CD4-positive, alpha-beta memory T cell (primary cell): ENCODE measurements at regions of chr17 and their contacts with region 1.

Region 1: DNA sequence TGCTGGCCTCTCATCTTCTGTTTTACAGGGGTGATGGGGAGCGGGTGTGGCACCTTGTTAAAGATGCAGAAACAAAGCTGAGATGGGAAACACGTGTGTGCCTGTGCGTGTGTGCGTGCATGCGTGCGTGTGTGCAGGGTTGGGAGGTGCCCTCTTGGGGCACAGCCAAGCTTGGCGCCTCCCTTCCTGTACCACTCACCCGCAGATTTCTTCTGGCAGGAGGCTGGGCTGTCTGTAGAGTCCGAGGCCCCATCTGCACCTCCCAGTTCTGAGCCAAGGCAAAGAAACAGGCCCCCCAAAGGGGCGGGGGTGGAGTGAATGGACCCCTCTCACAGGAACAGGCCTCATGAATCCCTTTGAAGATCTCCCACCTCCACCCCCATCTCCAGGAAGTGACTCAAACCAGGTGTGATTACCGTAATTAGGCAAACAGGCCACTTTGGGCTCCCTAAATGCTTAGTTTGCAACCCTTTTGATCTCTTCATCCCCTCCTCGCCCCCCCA is 20.9 kb downstream of the TNS4 start:
- DNase-seq: peak; percentile 92 to 96 (median 95)
- H3K4me3 ChIP-seq: peak overlapping the region in 1 of 2 donors; percentile 26
- H3K4me3 Mint-ChIP-seq: peak overlapping the region; percentile 49 to 78 (median 73)
- H3K27ac ChIP-seq: peak overlapping the region; percentile 83
- H3K27ac Mint-ChIP-seq: peak overlapping the region; percentile 97 to 100 (median 99)
- H3K4me1 ChIP-seq: peaks cover 91% of the 10 kb centered on the region
- H3K4me1 Mint-ChIP-seq: peaks cover 31 to 83% (median 55%) of the 10 kb centered on the region in 4 donors
- H3K27me3 ChIP-seq: no peaks in the 10 kb centered on the region
- H3K27me3 Mint-ChIP-seq: no peaks in the 10 kb centered on the region

Region 2: GRCh38 chr17:40516581-40517285 is 36.2 kb after region 1 on chr17:
- CTCF ChIA-PET with region 1: interaction called, 10 read pairs
- POLR2A ChIA-PET with region 1: interaction called, 53 read pairs
- intact Hi-C with region 1: loop called (anchors 1 kb)
- DNase-seq: peak; percentile 84 to 90 (median 87)
- H3K4me3 ChIP-seq: peak overlapping the region; percentile 51 to 70
- H3K4me3 Mint-ChIP-seq: peak overlapping the region; percentile 76 to 91 (median 84)
- H3K27ac ChIP-seq: peak overlapping the region; percentile 32
- H3K27ac Mint-ChIP-seq: peak overlapping the region; percentile 89 to 99 (median 96)
- H3K4me1 ChIP-seq: peaks cover 77% of the 10 kb centered on the region
- H3K4me1 Mint-ChIP-seq: peaks cover 51 to 76% (median 61%) of the 10 kb centered on the region in 4 donors
- H3K27me3 ChIP-seq: no peaks in the 10 kb centered on the region
- H3K27me3 Mint-ChIP-seq: peaks cover 0 to 2% of the 10 kb centered on the region in 2 donors

Region 3: DNA sequence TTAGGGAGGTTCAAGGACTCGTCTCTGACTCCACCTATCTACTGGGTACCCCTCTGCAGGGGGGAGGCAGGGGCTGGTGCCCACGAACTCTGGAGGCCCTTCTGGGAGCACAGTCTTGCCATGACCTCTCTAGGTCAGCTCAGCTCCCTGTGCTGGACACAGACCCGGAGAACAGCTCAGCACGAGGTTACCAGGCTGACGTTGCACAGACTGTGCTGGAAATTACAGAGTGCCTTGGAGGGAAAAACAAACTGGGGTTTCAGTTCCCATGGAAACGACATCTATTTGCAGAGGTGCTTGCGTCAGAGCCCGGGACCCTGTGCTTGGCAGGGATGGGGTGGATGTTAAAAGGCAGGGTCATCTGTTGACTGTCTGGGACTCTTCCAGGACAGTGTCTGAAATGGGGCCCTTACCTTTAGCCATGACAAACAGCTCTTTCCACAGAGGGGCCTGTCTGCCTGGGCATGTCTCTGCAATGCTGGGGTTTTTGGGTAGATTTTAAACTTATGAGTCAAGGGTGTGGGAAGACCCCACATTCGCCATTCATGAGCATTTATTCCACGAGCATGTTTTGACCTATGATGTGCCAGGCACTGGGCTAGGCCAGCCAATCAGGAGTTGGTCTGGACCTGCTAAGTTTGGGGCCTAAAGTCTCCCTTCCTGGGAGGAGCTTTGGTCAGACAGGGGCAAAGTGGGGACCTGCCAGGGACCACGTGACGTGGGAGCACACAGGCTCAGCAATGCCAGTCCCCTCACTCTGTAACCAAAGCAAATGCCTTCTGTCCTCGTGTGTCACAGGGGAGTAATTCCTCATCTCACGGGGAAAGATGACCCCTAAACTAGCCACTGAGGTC is 62.2 kb after region 1 on chr17:
- CTCF ChIA-PET with region 1: interaction called, 117 read pairs
- POLR2A ChIA-PET with region 1: interaction called, 31 read pairs
- intact Hi-C with region 1: loop called (anchors 2 kb)
- DNase-seq: peak in 4 of 5 donors; percentile 37 to 82 (median 50)
- H3K4me3 ChIP-seq: no peak overlapping the region
- H3K4me3 Mint-ChIP-seq: peak overlapping the region in 6 of 8 donors; percentile 67 to 94 (median 88)
- H3K27ac ChIP-seq: peak overlapping the region; percentile 69
- H3K27ac Mint-ChIP-seq: peak overlapping the region; percentile 94 to 100 (median 99)
- H3K4me1 ChIP-seq: peaks cover 90% of the 10 kb centered on the region
- H3K4me1 Mint-ChIP-seq: peaks cover 60 to 91% (median 75%) of the 10 kb centered on the region in 4 donors
- H3K27me3 ChIP-seq: no peaks in the 10 kb centered on the region
- H3K27me3 Mint-ChIP-seq: peaks cover 0 to 4% of the 10 kb centered on the region in 2 donors

Region 4: GRCh38 chr17:40551879-40552768 is 71.6 kb after region 1 on chr17:
- CTCF ChIA-PET with region 1: interaction called, 6 read pairs
- POLR2A ChIA-PET with region 1: interaction called, 14 read pairs
- intact Hi-C with region 1: no loop called
- DNase-seq: peak in 1 of 5 donors; percentile 25
- H3K4me3 ChIP-seq: no peak overlapping the region
- H3K4me3 Mint-ChIP-seq: peak overlapping the region in 5 of 8 donors; percentile 13 to 69 (median 27)
- H3K27ac ChIP-seq: no peak overlapping the region
- H3K27ac Mint-ChIP-seq: peak overlapping the region; percentile 60 to 96 (median 89)
- H3K4me1 ChIP-seq: peaks cover 99% of the 10 kb centered on the region
- H3K4me1 Mint-ChIP-seq: peaks cover 69 to 100% (median 86%) of the 10 kb centered on the region in 4 donors
- H3K27me3 ChIP-seq: no peaks in the 10 kb centered on the region
- H3K27me3 Mint-ChIP-seq: no peaks in the 10 kb centered on the region

Region 5: DNA sequence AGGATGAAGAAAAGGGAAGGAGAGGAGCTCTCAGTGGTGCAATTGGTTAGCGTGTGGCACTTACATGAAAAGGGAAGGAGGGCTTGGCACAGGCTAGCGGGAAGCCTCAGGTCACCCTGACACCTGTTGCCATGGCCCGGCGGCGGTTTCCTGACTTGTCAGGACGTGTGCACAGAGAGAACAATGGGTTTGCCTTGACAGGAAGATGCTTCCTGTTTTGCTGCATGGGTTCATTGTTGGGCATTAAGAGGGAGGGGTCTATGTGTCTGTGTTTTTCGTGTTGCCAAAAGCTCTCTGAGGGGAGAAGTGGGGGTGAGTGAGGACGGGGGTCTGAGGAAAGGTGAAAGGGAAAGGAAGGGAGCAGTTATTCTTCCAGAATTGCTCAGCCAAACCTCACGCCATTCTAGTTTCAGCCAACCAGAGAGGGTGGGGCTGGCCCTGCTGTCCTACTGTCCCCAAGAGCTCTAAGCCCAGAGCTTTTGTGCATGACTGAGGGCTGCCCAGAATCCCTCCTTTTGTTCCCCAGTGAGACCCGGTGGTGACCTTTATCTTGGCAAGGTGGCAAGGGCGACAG is 101.9 kb after region 1 on chr17:
- CTCF ChIA-PET with region 1: no interaction called
- POLR2A ChIA-PET with region 1: no interaction called
- intact Hi-C with region 1: no loop called
- DNase-seq: peak; percentile 74 to 78 (median 76)
- H3K4me3 ChIP-seq: peak overlapping the region; percentile 28 to 34
- H3K4me3 Mint-ChIP-seq: peak overlapping the region; percentile 32 to 84 (median 80)
- H3K27ac ChIP-seq: peak overlapping the region; percentile 47
- H3K27ac Mint-ChIP-seq: peak overlapping the region; percentile 75 to 96 (median 95)
- H3K4me1 ChIP-seq: peaks cover 72% of the 10 kb centered on the region
- H3K4me1 Mint-ChIP-seq: peaks cover 57 to 95% (median 78%) of the 10 kb centered on the region in 4 donors
- H3K27me3 ChIP-seq: no peaks in the 10 kb centered on the region
- H3K27me3 Mint-ChIP-seq: no peaks in the 10 kb centered on the region

Region 6: GRCh38 chr17:40696537-40697072 is 216.1 kb after region 1 on chr17:
- CTCF ChIA-PET with region 1: no interaction called
- POLR2A ChIA-PET with region 1: no interaction called
- intact Hi-C with region 1: no loop called
- DNase-seq: no peak
- H3K4me3 ChIP-seq: no peak overlapping the region
- H3K4me3 Mint-ChIP-seq: no peak overlapping the region
- H3K27ac ChIP-seq: no peak overlapping the region
- H3K27ac Mint-ChIP-seq: no peak overlapping the region
- H3K4me1 ChIP-seq: no peaks in the 10 kb centered on the region
- H3K4me1 Mint-ChIP-seq: peaks cover 0 to 8% (median 0%) of the 10 kb centered on the region in 4 donors
- H3K27me3 ChIP-seq: no peaks in the 10 kb centered on the region
- H3K27me3 Mint-ChIP-seq: peaks cover 11 to 27% of the 10 kb centered on the region in 2 donors